GM12878 (cell line): ENCODE measurements at regions of chr13 and their contacts with region 1.

Region 1: DNA sequence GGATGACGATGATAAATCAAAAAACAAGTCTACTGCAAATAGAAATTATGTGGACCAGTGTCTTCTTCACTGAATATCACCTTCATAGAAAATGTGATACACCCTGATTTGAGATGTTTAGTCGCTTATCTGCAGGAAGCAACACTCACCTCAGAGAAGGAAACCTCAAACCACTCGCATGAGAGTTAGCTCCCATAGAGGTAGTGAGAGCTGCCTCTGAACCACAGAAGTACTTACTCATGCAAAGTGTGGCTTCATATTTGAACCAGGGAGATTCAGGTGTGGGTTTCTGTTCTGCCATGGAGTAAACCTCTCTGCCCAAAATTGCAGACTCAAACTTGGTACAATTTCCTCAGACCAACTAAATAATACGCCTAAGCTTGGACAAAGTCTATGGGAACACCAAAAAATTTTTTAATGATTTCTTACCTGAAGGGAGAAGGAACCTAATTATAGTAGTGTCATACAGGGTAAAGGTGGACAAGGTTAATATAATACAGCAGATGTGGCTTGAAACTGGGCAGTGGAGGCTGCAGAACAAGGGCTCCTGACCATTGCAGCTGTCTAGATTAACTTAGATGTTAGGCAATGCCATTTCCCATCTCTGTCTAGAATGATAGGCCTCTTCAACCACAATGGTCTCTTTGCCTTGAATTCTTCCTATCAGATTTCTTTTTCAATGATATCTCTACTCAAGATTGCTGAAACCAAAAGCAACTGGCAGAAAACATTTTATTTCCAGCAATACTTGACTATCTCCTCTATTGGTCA is 29.6 kb upstream of the RCBTB2 start:
- DNase-seq: peak; percentile 98
- ATAC-seq: peak; percentile 99
- H3K4me3 ChIP-seq: peak overlapping the region; percentile 18; the same call in 1 of the 2 replicates
- H3K27ac ChIP-seq: peak overlapping the region; percentile 62
- H3K4me1 ChIP-seq: peaks cover 38% of the 10 kb centered on the region
- H3K27me3 ChIP-seq: no peaks in the 10 kb centered on the region
- CTCF ChIP-seq: no peak
- EP300 ChIP-seq: peak; percentile 84 to 96
- POLR2A ChIP-seq: no peak
- RAD21 ChIP-seq: 0 out of 2 replicates have a peak, but pooled peaks have one; percentile 4

Region 2: DNA sequence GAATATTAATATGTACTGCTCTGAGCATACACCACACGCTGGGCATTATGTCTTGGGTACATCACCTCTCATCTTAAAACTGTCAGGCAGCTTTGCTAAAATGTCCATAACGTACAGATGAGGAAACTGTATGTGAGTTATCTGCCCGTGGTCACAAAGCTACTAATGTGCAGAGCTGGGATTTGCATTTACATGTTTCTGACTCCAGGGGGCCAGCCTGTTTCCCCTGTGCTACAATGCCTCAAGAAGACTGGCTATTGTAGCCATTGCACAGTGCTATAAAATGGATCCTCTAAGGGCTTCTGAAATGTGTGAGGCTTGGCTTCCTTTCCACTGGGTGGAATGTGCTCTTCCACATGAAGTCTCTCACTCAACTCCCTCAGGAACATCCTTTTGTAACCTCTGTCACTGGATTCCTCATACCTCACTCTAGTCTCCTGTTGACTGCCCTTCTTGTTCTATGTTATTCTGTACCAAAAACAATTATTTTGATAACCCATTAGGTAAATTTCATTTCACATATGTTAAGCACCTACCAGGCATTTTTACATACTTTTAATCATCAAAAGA is 1570.0 kb before region 1 on chr13:
- CTCF ChIA-PET with region 1: no interaction called
- POLR2A ChIA-PET with region 1: no interaction called
- RAD21 ChIA-PET with region 1: no interaction called
- SMC1A ChIA-PET with region 1: no interaction called
- in situ Hi-C with region 1: no loop called
- intact Hi-C with region 1: no loop called
- DNase-seq: no peak
- ATAC-seq: peak; percentile 88
- H3K4me3 ChIP-seq: no peak overlapping the region
- H3K27ac ChIP-seq: no peak overlapping the region
- H3K4me1 ChIP-seq: peaks cover 17% of the 10 kb centered on the region
- H3K27me3 ChIP-seq: no peaks in the 10 kb centered on the region
- CTCF ChIP-seq: peak; percentile 31 to 49 (median 47)
- EP300 ChIP-seq: no peak
- POLR2A ChIP-seq: no peak
- RAD21 ChIP-seq: peak; percentile 49

Region 3: GRCh38 chr13:48291730-48292129 is 270.8 kb before region 1 on chr13:
- CTCF ChIA-PET with region 1: no interaction called
- POLR2A ChIA-PET with region 1: no interaction called
- RAD21 ChIA-PET with region 1: no interaction called
- SMC1A ChIA-PET with region 1: interaction called, 3 read pairs
- in situ Hi-C with region 1: no loop called
- intact Hi-C with region 1: loop called (anchors 2 kb)
- DNase-seq: no peak
- ATAC-seq: no peak
- H3K4me3 ChIP-seq: no peak overlapping the region
- H3K27ac ChIP-seq: no peak overlapping the region
- H3K4me1 ChIP-seq: peaks cover 5% of the 10 kb centered on the region
- H3K27me3 ChIP-seq: peaks cover 1 to 18% of the 10 kb centered on the region in 2 experiments; a peak in 3 of 4 replicates
- CTCF ChIP-seq: no peak
- EP300 ChIP-seq: no peak
- POLR2A ChIP-seq: no peak
- RAD21 ChIP-seq: no peak

Region 4: DNA sequence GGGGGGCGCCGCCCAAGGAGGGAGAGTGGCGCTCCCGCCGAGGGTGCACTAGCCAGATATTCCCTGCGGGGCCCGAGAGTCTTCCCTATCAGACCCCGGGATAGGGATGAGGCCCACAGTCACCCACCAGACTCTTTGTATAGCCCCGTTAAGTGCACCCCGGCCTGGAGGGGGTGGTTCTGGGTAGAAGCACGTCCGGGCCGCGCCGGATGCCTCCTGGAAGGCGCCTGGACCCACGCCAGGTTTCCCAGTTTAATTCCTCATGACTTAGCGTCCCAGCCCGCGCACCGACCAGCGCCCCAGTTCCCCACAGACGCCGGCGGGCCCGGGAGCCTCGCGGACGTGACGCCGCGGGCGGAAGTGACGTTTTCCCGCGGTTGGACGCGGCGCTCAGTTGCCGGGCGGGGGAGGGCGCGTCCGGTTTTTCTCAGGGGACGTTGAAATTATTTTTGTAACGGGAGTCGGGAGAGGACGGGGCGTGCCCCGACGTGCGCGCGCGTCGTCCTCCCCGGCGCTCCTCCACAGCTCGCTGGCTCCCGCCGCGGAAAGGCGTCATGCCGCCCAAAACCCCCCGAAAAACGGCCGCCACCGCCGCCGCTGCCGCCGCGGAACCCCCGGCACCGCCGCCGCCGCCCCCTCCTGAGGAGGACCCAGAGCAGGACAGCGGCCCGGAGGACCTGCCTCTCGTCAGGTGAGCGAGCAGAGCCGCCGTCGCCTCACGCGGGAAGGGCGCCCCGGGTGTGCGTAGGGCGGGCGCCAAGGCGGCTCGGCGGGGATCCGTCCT is 258.9 kb before region 1 on chr13 and contains the start of gene RB1:
- CTCF ChIA-PET with region 1: no interaction called
- POLR2A ChIA-PET with region 1: no interaction called
- RAD21 ChIA-PET with region 1: no interaction called
- SMC1A ChIA-PET with region 1: no interaction called
- in situ Hi-C with region 1: no loop called
- intact Hi-C with region 1: loop called (anchors 5 kb)
- DNase-seq: peak; percentile 51
- ATAC-seq: peak; percentile 73
- H3K4me3 ChIP-seq: peak within 1 kb of the TSS; percentile 87
- H3K27ac ChIP-seq: peak within 1 kb of the TSS; percentile 88
- H3K4me1 ChIP-seq: peaks cover 8% of the 10 kb centered on the region; the same call in 1 of the 2 replicates
- H3K27me3 ChIP-seq: no peaks in the 10 kb centered on the region
- CTCF ChIP-seq: 0 out of 6 replicates have a peak, but pooled peaks of 1 of the 3 experiments have one; percentile 5
- EP300 ChIP-seq: no peak
- POLR2A ChIP-seq: peak; percentile 91
- RAD21 ChIP-seq: no peak
- polyA plus RNA-seq, gene RB1: 2.8 to 3.6 TPM

Region 5: DNA sequence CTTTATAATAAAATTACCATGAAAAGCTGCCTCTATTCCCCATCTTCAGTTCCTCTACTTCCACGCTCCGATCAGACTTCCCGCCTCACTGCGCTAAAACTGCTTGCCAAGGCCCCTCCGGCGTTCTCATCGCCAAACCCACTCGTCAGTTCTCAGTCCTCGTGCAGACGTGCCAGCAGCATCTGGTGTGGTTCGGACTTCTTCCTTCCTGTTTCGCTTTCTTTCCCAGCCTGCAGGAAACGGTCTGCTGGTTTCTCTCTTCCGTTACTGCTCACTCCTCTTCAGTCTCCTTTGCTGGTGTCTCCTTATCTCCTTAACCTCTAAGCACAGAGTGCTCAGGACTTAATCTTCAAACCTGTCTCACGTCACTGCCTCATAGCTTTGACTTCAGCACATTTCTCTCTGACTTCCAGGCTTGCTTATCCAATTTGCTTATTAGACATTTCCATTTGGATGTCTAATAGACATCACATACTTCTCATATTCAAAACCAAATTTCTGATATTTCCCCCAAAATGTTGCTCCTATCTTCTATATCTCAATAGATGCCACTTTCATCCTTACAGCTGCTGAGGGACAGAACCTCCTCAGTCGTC is 69.9 kb before region 1 on chr13:
- CTCF ChIA-PET with region 1: interaction called, 4 read pairs
- POLR2A ChIA-PET with region 1: no interaction called
- RAD21 ChIA-PET with region 1: no interaction called
- SMC1A ChIA-PET with region 1: interaction called, 9 read pairs
- in situ Hi-C with region 1: no loop called
- intact Hi-C with region 1: loop called (anchors 5 kb)
- DNase-seq: peak; percentile 98
- ATAC-seq: peak; percentile 88
- H3K4me3 ChIP-seq: peak overlapping the region; percentile 66; the same call in 1 of the 2 replicates
- H3K27ac ChIP-seq: peak overlapping the region; percentile 91
- H3K4me1 ChIP-seq: peaks cover 72% of the 10 kb centered on the region
- H3K27me3 ChIP-seq: no peaks in the 10 kb centered on the region
- CTCF ChIP-seq: no peak
- EP300 ChIP-seq: peak in 1 of 2 experiments; percentile 45; a peak in 1 of 4 replicates
- POLR2A ChIP-seq: peak; percentile 77
- RAD21 ChIP-seq: no peak

Region 6: DNA sequence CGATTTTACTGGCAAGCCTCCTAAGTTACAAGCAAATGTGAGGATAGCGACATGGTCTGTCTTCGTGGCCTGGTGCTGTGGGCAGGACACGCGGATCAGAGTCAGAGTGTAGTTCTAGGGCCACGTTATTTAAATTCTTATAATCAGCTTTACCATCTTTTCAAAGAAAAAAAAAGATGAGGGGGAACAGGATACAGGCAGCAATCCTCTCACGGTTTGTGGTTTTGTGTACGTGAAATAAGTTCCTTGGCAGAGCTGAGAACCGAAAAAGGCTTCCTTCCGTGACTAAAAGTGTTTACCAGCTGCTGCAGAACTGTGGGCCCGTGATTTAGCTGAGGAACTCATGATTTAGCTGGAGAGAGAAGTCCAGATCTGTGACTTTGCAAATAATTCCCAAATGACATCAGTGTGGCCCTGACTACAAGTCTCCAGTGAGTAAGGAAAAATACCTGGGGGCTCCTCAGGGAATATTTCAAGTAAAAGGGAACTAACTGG is 56.8 kb before region 1 on chr13:
- CTCF ChIA-PET with region 1: interaction called, 4 read pairs
- POLR2A ChIA-PET with region 1: no interaction called
- RAD21 ChIA-PET with region 1: interaction called, 3 read pairs
- SMC1A ChIA-PET with region 1: interaction called, 11 read pairs
- in situ Hi-C with region 1: no loop called
- intact Hi-C with region 1: no loop called
- DNase-seq: peak; percentile 93
- ATAC-seq: peak; percentile 91
- H3K4me3 ChIP-seq: peak overlapping the region; percentile 36
- H3K27ac ChIP-seq: peak overlapping the region; percentile 85
- H3K4me1 ChIP-seq: peaks cover 61% of the 10 kb centered on the region
- H3K27me3 ChIP-seq: no peaks in the 10 kb centered on the region
- CTCF ChIP-seq: no peak
- EP300 ChIP-seq: peak; percentile 75 to 90; a peak in 2 of 4 replicates
- POLR2A ChIP-seq: no peak
- RAD21 ChIP-seq: 0 out of 2 replicates have a peak, but pooled peaks have one; percentile 11

Region 7: DNA sequence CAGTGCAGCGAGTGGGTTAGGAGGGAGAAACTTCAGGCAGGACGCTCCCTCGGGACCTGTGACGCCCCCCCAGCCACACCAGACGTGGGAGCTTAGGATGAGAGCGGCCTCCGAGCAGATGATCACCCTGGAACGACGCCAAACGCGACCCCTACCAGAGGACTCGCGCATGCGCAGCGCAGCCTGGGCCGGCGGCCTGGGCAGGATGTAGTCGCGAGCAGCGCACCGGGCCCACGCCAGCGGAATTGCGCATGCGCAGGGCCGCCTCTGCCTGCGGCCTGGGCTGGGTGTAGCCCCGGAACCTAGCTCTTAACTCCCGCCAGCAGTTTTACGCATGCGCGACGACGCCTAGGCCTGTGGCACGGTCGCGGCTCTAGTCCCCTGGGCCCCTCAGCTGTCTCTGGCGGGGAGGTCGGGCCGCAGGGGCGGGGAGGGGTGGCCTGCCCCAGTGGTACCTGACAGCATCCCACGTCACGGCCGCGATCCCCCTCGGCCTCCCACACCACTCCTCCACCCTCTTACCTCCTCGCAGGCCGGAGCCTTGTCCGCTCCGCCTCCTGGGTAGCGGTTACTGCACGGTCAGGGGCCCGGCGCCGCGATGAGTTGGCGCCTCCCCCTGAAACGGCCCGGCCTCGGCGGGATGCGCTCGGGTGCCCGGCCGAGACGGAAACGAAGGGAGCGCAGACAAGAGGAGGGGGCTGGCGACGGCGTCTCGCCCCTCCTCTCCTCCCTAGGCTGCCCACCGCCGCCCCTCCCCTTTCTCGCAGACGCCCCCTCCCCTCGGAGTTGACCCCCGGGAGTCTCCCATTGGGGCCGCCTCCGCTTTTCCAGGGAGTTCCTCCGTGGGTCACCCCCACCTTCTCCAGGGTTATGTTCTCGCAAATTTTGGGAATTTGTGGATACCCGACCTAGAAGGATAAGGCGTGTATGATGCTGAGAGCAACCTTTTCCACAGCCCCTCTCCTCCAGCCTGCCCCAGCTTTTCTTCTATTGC is 29.7 kb before region 1 on chr13 and contains the start of gene RCBTB2:
- CTCF ChIA-PET with region 1: interaction called, 3 read pairs
- POLR2A ChIA-PET with region 1: interaction called, 3 read pairs
- RAD21 ChIA-PET with region 1: interaction called, 3 read pairs
- SMC1A ChIA-PET with region 1: interaction called, 4 read pairs
- in situ Hi-C with region 1: no loop called
- intact Hi-C with region 1: loop called (anchors 2 kb)
- DNase-seq: peak; percentile 95
- ATAC-seq: peak; percentile 90
- H3K4me3 ChIP-seq: peak within 1 kb of the TSS; percentile 77
- H3K27ac ChIP-seq: peak within 1 kb of the TSS; percentile 93
- H3K4me1 ChIP-seq: peaks cover 29% of the 10 kb centered on the region
- H3K27me3 ChIP-seq: no peaks in the 10 kb centered on the region
- CTCF ChIP-seq: no peak
- EP300 ChIP-seq: no peak
- POLR2A ChIP-seq: peak; percentile 90
- RAD21 ChIP-seq: no peak
- polyA plus RNA-seq, gene RCBTB2: 8.7 to 10.4 TPM